ENCODE measurements at regions of chr18 and their contacts with region 1.

Region 1: GRCh38 chr18:45879681-45880655 is 54.5 kb downstream of the SIGLEC15 start:
- DNase-seq: peak; percentile 81
- H3K4me3 Mint-ChIP-seq: no peak overlapping the region
- H3K27ac Mint-ChIP-seq: no peak overlapping the region
- H3K4me1 Mint-ChIP-seq: peaks cover 14% of the 10 kb centered on the region
- H3K27me3 Mint-ChIP-seq: no peaks in the 10 kb centered on the region

Region 2: GRCh38 chr18:45621061-45621511 is 258.9 kb before region 1 on chr18:
- CTCF ChIA-PET with region 1: interaction called, 12 read pairs
- POLR2A ChIA-PET with region 1: no interaction called
- intact Hi-C with region 1: loop called (anchors 2 kb)
- DNase-seq: peak; percentile 44
- H3K4me3 Mint-ChIP-seq: no peak overlapping the region
- H3K27ac Mint-ChIP-seq: no peak overlapping the region
- H3K4me1 Mint-ChIP-seq: no peaks in the 10 kb centered on the region
- H3K27me3 Mint-ChIP-seq: peaks cover 6% of the 10 kb centered on the region

Region 3: DNA sequence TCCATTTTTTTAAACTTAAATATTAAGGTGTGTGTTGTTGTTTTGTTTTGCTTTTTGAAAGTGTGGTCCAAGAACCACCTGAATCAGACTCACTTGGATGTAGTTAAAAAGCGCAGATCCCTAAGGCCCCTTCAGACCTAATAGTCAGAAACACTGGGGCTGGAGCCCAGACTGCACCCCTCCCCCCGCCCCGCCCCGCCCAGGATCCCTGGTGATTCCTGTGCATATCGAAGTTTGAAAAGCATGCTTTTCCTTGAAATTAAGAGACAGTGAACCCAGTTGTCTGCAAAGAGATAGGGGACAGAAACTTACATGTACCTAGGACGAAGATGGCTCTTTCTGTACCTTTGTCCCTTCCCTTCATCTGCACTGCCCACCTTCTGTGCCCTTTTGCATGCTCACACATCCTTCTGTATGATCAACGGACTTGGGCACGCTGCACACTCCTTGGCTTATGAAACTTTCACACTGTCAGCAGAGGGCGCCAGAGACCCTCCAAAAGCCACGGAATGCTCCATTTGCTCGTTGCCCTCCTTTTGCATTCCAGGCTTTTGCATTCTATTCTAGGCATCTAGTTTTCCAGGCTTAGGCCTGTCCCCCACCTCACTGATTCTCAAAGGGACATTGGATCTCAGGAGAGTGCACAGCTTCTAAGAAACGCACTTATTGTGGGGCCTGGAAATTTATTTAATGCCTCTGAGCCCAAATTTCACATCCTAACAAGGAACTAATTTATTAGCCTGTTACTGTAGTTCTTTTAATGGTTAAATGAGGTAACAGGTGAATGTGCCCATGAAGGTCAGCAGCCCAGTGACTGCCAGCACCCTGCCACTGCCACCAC is 188.8 kb before region 1 on chr18:
- CTCF ChIA-PET with region 1: interaction called, 91 read pairs
- POLR2A ChIA-PET with region 1: no interaction called
- intact Hi-C with region 1: loop called (anchors 1 kb)
- DNase-seq: peak; percentile 84
- H3K4me3 Mint-ChIP-seq: no peak overlapping the region
- H3K27ac Mint-ChIP-seq: no peak overlapping the region
- H3K4me1 Mint-ChIP-seq: peaks cover 42% of the 10 kb centered on the region
- H3K27me3 Mint-ChIP-seq: peaks cover 6% of the 10 kb centered on the region

Region 4: DNA sequence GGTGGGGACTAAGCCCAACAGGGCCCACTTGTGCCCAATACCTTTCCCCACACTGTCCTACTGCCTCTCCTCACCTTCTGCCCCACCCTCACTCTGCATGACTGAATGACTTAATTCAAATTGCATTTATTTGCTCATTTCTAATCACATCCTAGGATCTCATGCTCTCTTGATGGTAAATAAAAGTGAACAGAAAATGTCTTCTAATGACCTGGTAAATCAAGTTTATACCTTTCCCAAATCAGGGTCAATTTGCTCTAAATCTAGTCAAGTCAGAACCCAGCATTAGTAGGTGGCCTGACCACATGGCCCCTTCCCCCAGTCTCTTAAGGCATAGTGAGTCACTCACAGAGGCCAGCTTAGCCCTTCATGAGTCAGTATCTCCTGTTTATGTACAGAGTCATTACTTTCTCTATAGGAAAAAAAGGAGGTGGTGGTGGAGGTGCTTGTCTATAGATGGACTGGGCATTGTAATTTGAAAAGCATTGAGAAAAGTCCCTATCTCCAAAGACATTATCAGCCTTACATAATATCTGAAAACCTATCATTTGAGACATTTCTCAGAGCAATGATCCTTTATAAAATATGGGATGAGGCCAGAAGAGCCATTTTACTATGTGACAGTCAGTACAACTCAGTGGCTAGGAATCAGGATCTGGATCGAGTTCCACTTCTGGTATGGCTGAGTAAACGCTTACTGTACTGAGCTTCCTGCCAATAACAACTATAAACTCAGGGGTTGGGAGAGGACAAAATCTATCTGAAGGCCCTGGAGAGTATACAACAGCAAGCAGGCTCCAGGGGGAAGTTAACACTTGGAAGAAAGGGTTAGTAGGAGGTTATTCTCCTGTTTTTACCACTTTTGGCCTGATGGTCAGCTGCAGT is 77.1 kb before region 1 on chr18:
- CTCF ChIA-PET with region 1: interaction called, 13 read pairs
- POLR2A ChIA-PET with region 1: no interaction called
- intact Hi-C with region 1: no loop called
- DNase-seq: peak; percentile 52
- H3K4me3 Mint-ChIP-seq: no peak overlapping the region
- H3K27ac Mint-ChIP-seq: no peak overlapping the region
- H3K4me1 Mint-ChIP-seq: peaks cover 8% of the 10 kb centered on the region
- H3K27me3 Mint-ChIP-seq: peaks cover 7% of the 10 kb centered on the region

Region 5: GRCh38 chr18:45910405-45911023 is 30.5 kb after region 1 on chr18:
- CTCF ChIA-PET with region 1: interaction called, 11 read pairs
- POLR2A ChIA-PET with region 1: no interaction called
- intact Hi-C with region 1: no loop called
- DNase-seq: peak; percentile 72
- H3K4me3 Mint-ChIP-seq: no peak overlapping the region
- H3K27ac Mint-ChIP-seq: no peak overlapping the region
- H3K4me1 Mint-ChIP-seq: no peaks in the 10 kb centered on the region
- H3K27me3 Mint-ChIP-seq: no peaks in the 10 kb centered on the region

Measured in activated CD4-positive, alpha-beta memory T cell treated with anti-CD3 and anti-CD28 coated beads for 36 hours (primary cell).